ENCODE measurements at regions of chr6 and their contacts with region 1.

Region 1: GRCh38 chr6:157379656-157380454 is 1.1 kb upstream of the ZDHHC14 start:
- DNase-seq: peak; percentile 87
- ATAC-seq: peak; percentile 83
- H3K4me3 ChIP-seq: peak overlapping the region; percentile 71
- H3K27ac ChIP-seq: peak overlapping the region; percentile 69
- H3K4me1 ChIP-seq: no peaks in the 10 kb centered on the region
- H3K27me3 ChIP-seq: no peaks in the 10 kb centered on the region
- CTCF ChIP-seq: no peak
- POLR2A ChIP-seq: no peak
- RAD21 ChIP-seq: no peak

Region 2: GRCh38 chr6:157068691-157069324 is 311.0 kb before region 1 on chr6:
- CTCF ChIA-PET with region 1: no interaction called
- POLR2A ChIA-PET with region 1: no interaction called
- dilution Hi-C with region 1: no loop called
- in situ Hi-C with region 1: no loop called
- intact Hi-C with region 1: no loop called
- DNase-seq: peak; percentile 49
- ATAC-seq: peak; percentile 47
- H3K4me3 ChIP-seq: no peak overlapping the region
- H3K27ac ChIP-seq: no peak overlapping the region
- H3K4me1 ChIP-seq: peaks cover 17% of the 10 kb centered on the region
- H3K27me3 ChIP-seq: no peaks in the 10 kb centered on the region
- CTCF ChIP-seq: no peak
- POLR2A ChIP-seq: no peak
- RAD21 ChIP-seq: no peak

Region 3: DNA sequence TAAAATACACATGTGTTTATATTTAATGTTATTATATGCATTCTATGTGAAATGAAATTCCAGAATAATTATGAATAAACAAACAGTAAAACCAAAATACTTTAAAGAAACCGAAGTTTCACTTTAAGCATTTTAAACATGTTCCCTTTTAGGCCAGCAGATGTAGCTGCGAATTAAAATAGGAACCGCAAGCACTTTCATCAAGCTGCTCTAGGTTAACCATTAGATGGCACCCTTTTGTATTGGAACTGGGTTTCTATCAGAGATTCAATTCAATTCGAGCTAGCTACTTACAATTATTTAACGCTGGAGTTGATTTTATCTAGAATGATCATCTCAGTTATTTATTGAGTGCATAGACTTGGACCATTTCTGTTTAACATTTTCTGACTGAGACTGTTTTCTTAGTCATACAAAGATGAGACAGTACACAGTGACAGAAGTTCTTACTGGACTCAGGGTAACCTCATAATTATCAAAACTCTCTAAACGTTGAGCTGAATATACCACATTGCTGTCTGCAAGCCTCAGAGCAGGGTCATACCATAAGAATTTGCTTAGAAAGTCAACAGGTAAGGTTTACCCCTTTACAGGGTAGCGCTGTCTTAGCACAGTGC is 65.0 kb before region 1 on chr6:
- CTCF ChIA-PET with region 1: no interaction called
- POLR2A ChIA-PET with region 1: no interaction called
- dilution Hi-C with region 1: no loop called
- in situ Hi-C with region 1: no loop called
- intact Hi-C with region 1: loop called (anchors 2 kb)
- DNase-seq: peak; percentile 85
- ATAC-seq: peak; percentile 88
- H3K4me3 ChIP-seq: no peak overlapping the region
- H3K27ac ChIP-seq: no peak overlapping the region
- H3K4me1 ChIP-seq: peaks cover 3% of the 10 kb centered on the region; the same call in 1 of the 2 replicates
- H3K27me3 ChIP-seq: no peaks in the 10 kb centered on the region
- CTCF ChIP-seq: peak; percentile 99
- POLR2A ChIP-seq: no peak
- RAD21 ChIP-seq: peak; percentile 88

Region 4: DNA sequence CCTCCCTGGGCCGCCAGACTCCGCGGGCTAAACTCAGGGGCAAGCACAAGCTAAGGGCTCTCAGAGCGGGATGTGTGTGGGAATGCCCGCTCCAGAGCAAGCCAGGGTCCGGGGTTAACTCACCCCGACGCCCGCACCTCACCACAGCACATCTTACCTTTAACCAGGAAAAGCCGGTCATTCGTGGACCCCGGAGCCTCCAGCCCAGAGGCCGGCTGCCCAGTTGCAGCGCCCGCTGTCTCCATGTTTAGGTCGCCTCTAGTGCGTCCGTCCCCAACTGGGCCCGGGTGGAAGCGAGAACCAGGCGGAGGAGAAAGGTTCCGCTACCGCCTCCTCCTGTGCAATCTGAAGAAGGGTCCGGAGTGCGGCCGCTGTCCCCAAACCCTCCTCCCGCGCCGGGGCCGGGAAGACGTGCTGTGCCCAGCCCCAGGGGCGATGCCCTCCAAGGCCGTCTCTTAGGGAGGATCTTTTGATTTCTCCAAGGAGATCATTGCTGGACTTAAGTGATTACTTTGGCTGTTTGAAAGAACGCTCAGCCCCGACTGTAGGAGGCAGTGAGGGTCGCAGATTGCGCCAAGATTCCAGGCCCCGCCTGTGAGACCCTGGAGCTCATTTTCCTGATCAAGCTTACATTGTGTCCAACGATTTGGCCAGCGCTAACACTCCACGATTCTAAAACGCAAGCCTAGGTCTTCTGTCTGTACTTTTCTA is 56.4 kb before region 1 on chr6 and contains the start of gene TMEM242:
- CTCF ChIA-PET with region 1: no interaction called
- POLR2A ChIA-PET with region 1: no interaction called
- dilution Hi-C with region 1: no loop called
- in situ Hi-C with region 1: no loop called
- intact Hi-C with region 1: loop called (anchors 1 kb)
- DNase-seq: peak; percentile 93
- ATAC-seq: peak; percentile 96
- H3K4me3 ChIP-seq: peak within 1 kb of the TSS; percentile 86
- H3K27ac ChIP-seq: peak within 1 kb of the TSS; percentile 84
- H3K4me1 ChIP-seq: no peaks in the 10 kb centered on the region
- H3K27me3 ChIP-seq: no peaks in the 10 kb centered on the region
- CTCF ChIP-seq: no peak
- POLR2A ChIP-seq: peak; percentile 85
- RAD21 ChIP-seq: 0 out of 2 replicates have a peak, but pooled peaks have one; percentile 32
- total RNA-seq, gene TMEM242: 2.3 and 4.2 TPM in 2 replicates

Region 5: DNA sequence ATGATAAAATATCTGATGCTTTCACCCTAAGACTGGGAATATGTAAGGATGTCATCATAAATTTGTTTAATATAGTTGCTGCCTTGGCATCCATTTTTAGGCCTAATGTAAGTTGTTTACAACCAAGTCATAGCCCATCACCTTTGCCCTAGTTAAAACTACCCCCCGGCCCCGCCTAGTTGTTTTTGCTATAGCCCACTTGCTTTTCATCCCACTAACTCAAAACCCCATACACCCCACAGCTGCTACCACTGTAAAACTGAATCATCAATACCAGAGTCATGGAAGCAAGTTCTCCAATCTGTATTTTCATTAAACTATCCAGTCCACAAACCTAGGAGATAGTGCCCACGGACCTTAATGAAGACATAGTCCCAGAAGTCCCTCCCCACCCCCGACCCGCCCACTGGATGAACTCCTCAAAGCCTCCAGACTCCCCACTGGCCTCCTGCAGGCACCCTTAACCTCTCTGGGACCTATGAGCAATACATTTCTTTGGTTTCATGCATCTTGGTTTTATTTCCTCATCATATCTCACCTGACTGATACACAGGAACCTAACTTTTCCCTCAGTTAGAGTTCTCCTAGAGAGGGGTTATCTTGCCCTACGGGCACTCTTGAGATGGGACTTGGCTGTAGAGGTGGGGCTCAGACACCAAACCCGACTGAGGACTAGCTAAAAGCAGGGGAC is 11.4 kb before region 1 on chr6:
- CTCF ChIA-PET with region 1: no interaction called
- POLR2A ChIA-PET with region 1: no interaction called
- dilution Hi-C with region 1: no loop called
- in situ Hi-C with region 1: no loop called
- intact Hi-C with region 1: no loop called
- DNase-seq: no peak
- ATAC-seq: no peak
- H3K4me3 ChIP-seq: no peak overlapping the region
- H3K27ac ChIP-seq: no peak overlapping the region
- H3K4me1 ChIP-seq: no peaks in the 10 kb centered on the region
- H3K27me3 ChIP-seq: peaks cover 15% of the 10 kb centered on the region
- CTCF ChIP-seq: no peak
- POLR2A ChIP-seq: no peak
- RAD21 ChIP-seq: no peak

Region 6: GRCh38 chr6:157527471-157527907 is 147.6 kb after region 1 on chr6:
- CTCF ChIA-PET with region 1: no interaction called
- POLR2A ChIA-PET with region 1: no interaction called
- dilution Hi-C with region 1: no loop called
- in situ Hi-C with region 1: no loop called
- intact Hi-C with region 1: loop called (anchors 5 kb)
- DNase-seq: peak; percentile 23
- ATAC-seq: peak; percentile 63; the same call in 1 of the 2 replicates
- H3K4me3 ChIP-seq: no peak overlapping the region
- H3K27ac ChIP-seq: no peak overlapping the region; the same call in 1 of the 2 replicates
- H3K4me1 ChIP-seq: no peaks in the 10 kb centered on the region; the same call in 1 of the 2 replicates
- H3K27me3 ChIP-seq: peaks cover 1% of the 10 kb centered on the region; the same call in 1 of the 2 replicates
- CTCF ChIP-seq: no peak
- POLR2A ChIP-seq: no peak
- RAD21 ChIP-seq: no peak

Region 7: DNA sequence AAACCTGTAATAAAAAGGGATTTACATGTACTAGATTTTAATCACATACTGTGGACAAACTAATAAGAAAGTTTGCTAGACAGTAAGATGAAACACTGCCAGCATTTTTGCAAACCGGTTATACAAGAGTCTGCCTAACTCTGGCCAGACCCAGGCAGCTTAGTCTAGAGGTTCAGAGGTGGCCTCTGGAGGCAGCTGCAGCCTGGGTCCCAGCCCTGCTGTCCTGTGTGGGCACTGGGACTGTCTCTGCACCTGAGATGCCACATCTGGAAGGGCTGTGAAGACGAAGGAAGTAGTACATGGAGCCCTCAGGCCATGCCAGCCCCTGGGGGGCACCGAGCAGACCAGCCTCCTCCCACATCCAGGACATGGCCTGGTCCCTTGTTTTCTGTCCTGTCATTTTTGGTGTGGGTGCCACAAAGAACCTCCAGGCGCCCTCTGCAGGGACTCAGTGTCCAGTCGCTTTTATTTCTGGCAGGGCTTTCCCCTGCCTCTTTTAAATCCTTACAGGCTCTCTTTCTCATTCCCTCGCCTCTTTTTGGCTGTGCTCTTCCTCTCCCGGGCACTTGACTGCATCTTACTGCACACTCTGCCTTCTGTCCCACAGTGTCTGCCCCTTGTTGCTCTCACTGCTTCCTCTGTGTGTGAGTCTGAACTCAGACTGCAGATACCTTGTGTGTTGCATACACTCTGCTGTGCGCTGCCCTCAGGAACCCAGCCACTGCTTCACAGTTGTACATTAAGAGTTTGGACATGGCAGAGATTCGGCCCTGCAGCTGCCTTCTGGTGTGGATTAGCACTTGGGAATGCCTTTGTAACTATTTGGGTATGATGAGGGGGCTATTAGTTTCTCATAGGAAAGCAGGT is 217.8 kb after region 1 on chr6:
- CTCF ChIA-PET with region 1: interaction called, 3 read pairs
- POLR2A ChIA-PET with region 1: no interaction called
- dilution Hi-C with region 1: no loop called
- in situ Hi-C with region 1: no loop called
- intact Hi-C with region 1: loop called (anchors 1 kb)
- DNase-seq: no peak
- ATAC-seq: peak; percentile 74
- H3K4me3 ChIP-seq: no peak overlapping the region
- H3K27ac ChIP-seq: peak overlapping the region; percentile 81; the same call in 1 of the 2 replicates
- H3K4me1 ChIP-seq: peaks cover 12% of the 10 kb centered on the region
- H3K27me3 ChIP-seq: no peaks in the 10 kb centered on the region
- CTCF ChIP-seq: peak; percentile 53
- POLR2A ChIP-seq: no peak
- RAD21 ChIP-seq: peak; percentile 59

Region 8: GRCh38 chr6:157614026-157614568 is 234.2 kb after region 1 on chr6:
- CTCF ChIA-PET with region 1: no interaction called
- POLR2A ChIA-PET with region 1: no interaction called
- dilution Hi-C with region 1: no loop called
- in situ Hi-C with region 1: no loop called
- intact Hi-C with region 1: loop called (anchors 5 kb)
- DNase-seq: peak; percentile 41
- ATAC-seq: no peak
- H3K4me3 ChIP-seq: no peak overlapping the region
- H3K27ac ChIP-seq: peak overlapping the region; percentile 67; the same call in 1 of the 2 replicates
- H3K4me1 ChIP-seq: peaks cover 22% of the 10 kb centered on the region
- H3K27me3 ChIP-seq: no peaks in the 10 kb centered on the region
- CTCF ChIP-seq: peak; percentile 20; the same call in 1 of the 2 replicates
- POLR2A ChIP-seq: no peak
- RAD21 ChIP-seq: no peak

Region 9: DNA sequence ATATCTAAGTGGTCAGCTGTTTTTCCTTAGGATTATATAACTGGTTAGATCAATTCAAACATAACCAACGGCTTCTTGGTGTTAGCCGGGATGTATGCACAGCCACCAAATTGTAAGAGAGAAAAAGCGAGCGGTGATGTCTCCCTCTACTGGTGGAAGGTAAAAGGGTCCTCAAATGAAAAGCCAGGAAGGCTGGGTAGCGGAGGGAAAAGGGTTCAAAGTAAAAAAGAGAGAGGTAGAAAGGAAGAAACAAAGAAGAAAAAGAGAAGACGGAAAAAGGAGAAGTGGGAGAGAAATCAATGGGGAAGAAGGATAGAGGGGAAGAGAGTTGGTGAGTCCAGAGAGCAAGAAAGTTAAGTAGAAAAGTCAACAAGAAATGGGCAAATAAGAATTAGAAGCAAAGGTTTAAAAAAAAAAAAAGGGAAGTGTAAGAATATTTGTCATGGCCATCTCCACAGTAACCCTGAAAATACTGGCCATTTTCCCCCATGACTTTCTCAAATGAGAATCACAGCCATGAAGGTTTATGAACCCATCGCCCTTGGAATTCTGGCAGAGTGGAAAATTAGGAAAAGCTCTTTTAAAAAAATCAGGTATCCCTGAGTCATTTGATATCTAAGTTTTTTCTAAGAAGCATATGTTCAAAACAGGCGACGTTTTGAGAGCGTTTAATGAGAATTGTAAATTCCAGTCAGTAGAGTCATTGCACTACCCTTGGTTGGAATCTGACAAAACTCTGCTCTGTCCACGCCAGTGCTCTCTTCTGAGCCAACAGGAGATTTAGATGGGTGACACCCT is 287.6 kb after region 1 on chr6:
- CTCF ChIA-PET with region 1: interaction called, 7 read pairs
- POLR2A ChIA-PET with region 1: no interaction called
- dilution Hi-C with region 1: no loop called
- in situ Hi-C with region 1: no loop called
- intact Hi-C with region 1: loop called (anchors 1 kb)
- DNase-seq: peak; percentile 70
- ATAC-seq: peak; percentile 45
- H3K4me3 ChIP-seq: no peak overlapping the region
- H3K27ac ChIP-seq: no peak overlapping the region
- H3K4me1 ChIP-seq: peaks cover 10% of the 10 kb centered on the region; the same call in 1 of the 2 replicates
- H3K27me3 ChIP-seq: no peaks in the 10 kb centered on the region
- CTCF ChIP-seq: peak; percentile 84
- POLR2A ChIP-seq: no peak
- RAD21 ChIP-seq: peak; percentile 86